ENCODE measurements at regions of chr21 and their contacts with region 1.

Region 1: GRCh38 chr21:45596704-45597318 is 46.7 kb upstream of the PCBP3 start:
- DNase-seq: peak; percentile 72 to 91 (median 87)
- ATAC-seq: peak; percentile 69
- H3K4me3 ChIP-seq: no peak overlapping the region
- H3K4me3 Mint-ChIP-seq: no peak overlapping the region
- H3K27ac ChIP-seq: no peak overlapping the region
- H3K27ac Mint-ChIP-seq: no peak overlapping the region
- H3K4me1 ChIP-seq: peaks cover 15% of the 10 kb centered on the region
- H3K4me1 Mint-ChIP-seq: peaks cover 14% of the 10 kb centered on the region
- H3K27me3 ChIP-seq: peaks cover 0 to 1% of the 10 kb centered on the region in 2 experiments
- H3K27me3 Mint-ChIP-seq: no peaks in the 10 kb centered on the region
- CTCF ChIP-seq: peak; percentile 85

Region 2: GRCh38 chr21:45287438-45288391 is 309.1 kb before region 1 on chr21 and contains the start of gene POFUT2:
- CTCF ChIA-PET with region 1: interaction called, 8 read pairs
- POLR2A ChIA-PET with region 1: no interaction called
- intact Hi-C with region 1: loop called (anchors 2 to 5 kb)
- DNase-seq: peak; percentile 94 to 100 (median 99)
- ATAC-seq: peak; percentile 85
- H3K4me3 ChIP-seq: peak within 1 kb of the TSS; percentile 70 to 83
- H3K4me3 Mint-ChIP-seq: peak within 1 kb of the TSS; percentile 85
- H3K27ac ChIP-seq: peak within 1 kb of the TSS; percentile 80 to 83
- H3K27ac Mint-ChIP-seq: peak within 1 kb of the TSS; percentile 81
- H3K4me1 ChIP-seq: peaks cover 18% of the 10 kb centered on the region
- H3K4me1 Mint-ChIP-seq: peaks cover 26% of the 10 kb centered on the region
- H3K27me3 ChIP-seq: no peaks in the 10 kb centered on the region
- H3K27me3 Mint-ChIP-seq: no peaks in the 10 kb centered on the region
- CTCF ChIP-seq: no peak
- total RNA-seq, gene POFUT2: 54.7 to 56.7 TPM

Region 3: DNA sequence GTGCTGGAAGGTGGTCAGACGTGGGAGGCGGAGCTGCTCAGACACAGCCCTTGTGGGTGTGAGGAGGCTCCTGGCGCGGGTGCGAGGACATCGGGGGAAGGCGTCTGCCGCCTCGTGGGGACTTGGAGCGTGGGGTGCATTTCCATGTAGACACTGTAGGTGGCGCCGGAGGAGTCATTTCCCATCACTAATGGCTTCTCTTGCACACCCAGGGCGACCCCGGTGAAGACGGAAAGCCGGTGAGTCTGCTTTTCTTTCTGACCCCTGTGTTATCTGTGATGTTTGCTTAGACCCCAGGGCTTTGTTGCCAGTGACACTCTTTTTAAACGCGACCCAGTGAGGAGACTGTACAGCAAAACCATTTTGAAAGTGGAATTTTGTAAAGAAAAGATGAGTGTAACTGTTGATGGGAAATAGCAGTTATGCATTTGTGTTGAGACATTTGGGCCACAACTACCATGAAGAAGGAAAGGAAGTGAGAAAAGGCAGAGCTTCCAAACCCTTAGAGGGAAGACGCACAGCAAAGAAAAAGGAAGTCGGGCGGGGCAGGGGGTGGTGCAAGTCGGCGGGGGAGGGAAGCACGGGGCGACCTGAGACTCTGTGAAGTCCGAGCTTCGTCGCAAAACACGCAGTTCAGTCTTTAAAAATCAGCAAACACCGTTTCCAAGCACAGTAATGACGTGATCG is 118.6 kb before region 1 on chr21:
- CTCF ChIA-PET with region 1: interaction called, 33 read pairs
- POLR2A ChIA-PET with region 1: no interaction called
- intact Hi-C with region 1: loop called (anchors 1 kb)
- DNase-seq: peak; percentile 64 to 90 (median 83)
- ATAC-seq: peak; percentile 80
- H3K4me3 ChIP-seq: peak overlapping the region; percentile 44 to 47
- H3K4me3 Mint-ChIP-seq: peak overlapping the region; percentile 85
- H3K27ac ChIP-seq: peak overlapping the region; percentile 72 to 74
- H3K27ac Mint-ChIP-seq: peak overlapping the region; percentile 98
- H3K4me1 ChIP-seq: peaks cover 45% of the 10 kb centered on the region
- H3K4me1 Mint-ChIP-seq: peaks cover 33% of the 10 kb centered on the region
- H3K27me3 ChIP-seq: peaks cover 0 to 5% of the 10 kb centered on the region in 2 experiments
- H3K27me3 Mint-ChIP-seq: no peaks in the 10 kb centered on the region
- CTCF ChIP-seq: peak; percentile 93

Region 4: DNA sequence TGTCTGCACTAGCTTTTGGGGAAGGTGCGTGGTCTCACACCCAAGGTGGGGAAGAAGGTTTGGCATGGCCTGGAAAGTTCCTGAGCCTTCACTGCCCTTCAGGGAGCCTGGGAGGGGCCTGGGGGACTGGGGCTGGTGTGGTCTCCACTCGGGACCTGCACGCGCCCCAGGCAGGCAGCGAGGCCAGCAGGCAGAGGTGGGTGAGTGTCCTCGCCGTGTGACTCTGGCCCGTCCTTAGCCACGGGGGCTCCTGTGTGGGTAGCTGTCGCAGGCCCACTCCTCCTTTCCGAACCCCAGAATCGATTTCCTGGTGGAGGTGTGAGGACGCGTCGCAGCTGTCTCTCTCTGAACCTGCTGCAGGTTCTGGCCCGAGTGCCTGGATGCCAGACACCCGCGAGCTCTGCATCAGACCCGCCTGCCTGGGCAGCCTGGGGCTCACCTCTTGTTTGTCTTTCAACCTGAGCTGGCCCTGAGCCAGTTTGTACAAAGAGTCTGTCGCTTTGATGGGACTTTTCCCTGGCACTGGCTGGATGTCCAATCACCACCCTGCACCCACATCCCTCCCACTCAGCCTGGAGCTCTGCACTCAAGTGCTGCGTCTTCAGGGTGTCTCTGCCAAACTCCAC is 18.5 kb before region 1 on chr21:
- CTCF ChIA-PET with region 1: interaction called, 14 read pairs
- POLR2A ChIA-PET with region 1: no interaction called
- intact Hi-C with region 1: no loop called
- DNase-seq: no peak
- ATAC-seq: no peak
- H3K4me3 ChIP-seq: no peak overlapping the region
- H3K4me3 Mint-ChIP-seq: no peak overlapping the region
- H3K27ac ChIP-seq: no peak overlapping the region
- H3K27ac Mint-ChIP-seq: no peak overlapping the region
- H3K4me1 ChIP-seq: no peaks in the 10 kb centered on the region
- H3K4me1 Mint-ChIP-seq: peaks cover 5% of the 10 kb centered on the region
- H3K27me3 ChIP-seq: no peaks in the 10 kb centered on the region
- H3K27me3 Mint-ChIP-seq: peaks cover 3% of the 10 kb centered on the region
- CTCF ChIP-seq: no peak

Region 5: DNA sequence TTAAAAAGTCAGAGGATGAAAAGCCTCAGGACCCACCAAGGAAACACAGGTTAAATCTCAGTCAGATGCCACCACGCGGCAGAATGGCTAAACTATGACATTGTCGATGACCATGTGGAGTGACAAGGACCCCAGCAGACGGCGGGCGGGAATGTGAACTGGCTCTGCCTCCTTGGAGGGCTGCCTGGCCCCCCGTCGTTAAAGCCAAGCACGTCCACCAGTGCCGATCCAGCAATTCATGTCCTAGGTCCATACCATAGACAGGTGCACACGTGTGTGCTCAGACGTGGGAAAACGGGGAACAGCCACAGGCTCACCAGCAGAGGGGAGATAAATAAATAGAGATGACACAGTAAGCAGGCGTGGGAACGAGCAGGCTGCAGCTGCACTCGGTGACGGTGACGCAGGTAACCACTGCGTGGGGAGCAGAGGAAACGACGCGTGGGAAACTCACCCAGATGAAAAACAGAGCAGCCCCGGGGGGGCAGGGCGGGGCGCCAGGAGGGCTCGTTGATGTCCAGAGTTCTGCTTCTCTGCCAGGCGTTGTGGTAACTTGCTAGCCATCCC is 18.4 kb after region 1 on chr21:
- CTCF ChIA-PET with region 1: interaction called, 11 read pairs
- POLR2A ChIA-PET with region 1: no interaction called
- intact Hi-C with region 1: loop called in 1 of 2 experiments (anchors 1 kb)
- DNase-seq: peak; percentile 68 to 97 (median 89)
- ATAC-seq: peak; percentile 89
- H3K4me3 ChIP-seq: peak overlapping the region; percentile 46 to 51
- H3K4me3 Mint-ChIP-seq: peak overlapping the region; percentile 81
- H3K27ac ChIP-seq: peak overlapping the region; percentile 55 to 96
- H3K27ac Mint-ChIP-seq: peak overlapping the region; percentile 98
- H3K4me1 ChIP-seq: peaks cover 26% of the 10 kb centered on the region
- H3K4me1 Mint-ChIP-seq: peaks cover 36% of the 10 kb centered on the region
- H3K27me3 ChIP-seq: peaks cover 0 to 4% of the 10 kb centered on the region in 2 experiments
- H3K27me3 Mint-ChIP-seq: no peaks in the 10 kb centered on the region
- CTCF ChIP-seq: peak; percentile 43

Region 6: GRCh38 chr21:45923146-45923545 is 326.3 kb after region 1 on chr21:
- CTCF ChIA-PET with region 1: no interaction called
- POLR2A ChIA-PET with region 1: no interaction called
- intact Hi-C with region 1: loop called in 1 of 2 experiments (anchors 2 kb)
- DNase-seq: peak; percentile 49 to 83 (median 75)
- ATAC-seq: peak; percentile 100
- H3K4me3 ChIP-seq: no peak overlapping the region
- H3K4me3 Mint-ChIP-seq: no peak overlapping the region
- H3K27ac ChIP-seq: no peak overlapping the region
- H3K27ac Mint-ChIP-seq: no peak overlapping the region
- H3K4me1 ChIP-seq: peaks cover 18% of the 10 kb centered on the region
- H3K4me1 Mint-ChIP-seq: peaks cover 19% of the 10 kb centered on the region
- H3K27me3 ChIP-seq: no peaks in the 10 kb centered on the region
- H3K27me3 Mint-ChIP-seq: no peaks in the 10 kb centered on the region
- CTCF ChIP-seq: peak; percentile 84